AG04450 (cell line): ENCODE measurements at regions of chr7 and their contacts with region 1.

Region 1: DNA sequence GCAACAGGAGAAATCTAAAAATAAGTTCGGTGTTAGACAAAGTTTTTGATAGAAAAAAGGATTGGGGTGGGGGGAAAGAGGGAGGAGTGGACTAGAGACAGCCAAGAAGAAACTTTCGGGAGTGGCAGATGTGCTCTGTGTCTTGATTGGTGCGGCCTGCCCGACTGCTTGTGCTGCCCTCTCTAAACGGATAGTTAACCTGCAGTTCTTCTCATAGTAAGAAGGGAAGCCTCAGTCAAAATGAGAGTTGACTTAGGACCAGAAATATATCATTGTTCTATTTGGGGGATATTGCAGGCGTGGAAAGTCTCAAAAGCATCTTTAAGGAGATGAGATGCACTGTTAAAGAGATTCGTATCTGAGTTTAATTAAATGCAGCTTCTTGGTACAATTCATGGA is 39.3 kb downstream of the UBE3C start:
- DNase-seq: no peak
- H3K4me3 ChIP-seq: no peak overlapping the region
- H3K27ac ChIP-seq: no peak overlapping the region
- H3K27me3 ChIP-seq: no peaks in the 10 kb centered on the region
- CTCF ChIP-seq: no peak

Region 2: DNA sequence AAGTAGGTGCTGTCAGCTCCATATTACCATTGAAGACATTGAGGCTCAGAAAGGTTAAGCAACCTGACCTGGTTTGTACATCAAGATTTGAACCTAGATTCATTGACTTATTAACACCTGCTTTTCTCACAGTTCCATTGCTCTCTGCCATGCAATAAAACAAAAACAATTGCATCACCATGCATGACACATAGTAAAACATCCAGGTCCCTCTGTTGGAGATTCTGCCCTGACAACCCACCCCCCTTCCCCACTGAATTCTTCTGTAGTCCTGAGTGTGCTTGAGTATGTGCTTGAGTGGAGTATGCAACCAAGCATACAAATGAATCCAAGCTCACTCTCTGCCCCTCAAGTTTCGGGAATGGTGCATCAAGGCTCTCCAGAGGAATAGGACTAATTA is 279.0 kb before region 1 on chr7:
- CTCF ChIA-PET with region 1: no interaction called
- POLR2A ChIA-PET with region 1: interaction called, 10 read pairs
- DNase-seq: no peak
- H3K4me3 ChIP-seq: no peak overlapping the region
- H3K27ac ChIP-seq: no peak overlapping the region
- H3K27me3 ChIP-seq: no peaks in the 10 kb centered on the region
- CTCF ChIP-seq: no peak